ENCODE measurements at regions of chr14 and their contacts with region 1.

Region 1: DNA sequence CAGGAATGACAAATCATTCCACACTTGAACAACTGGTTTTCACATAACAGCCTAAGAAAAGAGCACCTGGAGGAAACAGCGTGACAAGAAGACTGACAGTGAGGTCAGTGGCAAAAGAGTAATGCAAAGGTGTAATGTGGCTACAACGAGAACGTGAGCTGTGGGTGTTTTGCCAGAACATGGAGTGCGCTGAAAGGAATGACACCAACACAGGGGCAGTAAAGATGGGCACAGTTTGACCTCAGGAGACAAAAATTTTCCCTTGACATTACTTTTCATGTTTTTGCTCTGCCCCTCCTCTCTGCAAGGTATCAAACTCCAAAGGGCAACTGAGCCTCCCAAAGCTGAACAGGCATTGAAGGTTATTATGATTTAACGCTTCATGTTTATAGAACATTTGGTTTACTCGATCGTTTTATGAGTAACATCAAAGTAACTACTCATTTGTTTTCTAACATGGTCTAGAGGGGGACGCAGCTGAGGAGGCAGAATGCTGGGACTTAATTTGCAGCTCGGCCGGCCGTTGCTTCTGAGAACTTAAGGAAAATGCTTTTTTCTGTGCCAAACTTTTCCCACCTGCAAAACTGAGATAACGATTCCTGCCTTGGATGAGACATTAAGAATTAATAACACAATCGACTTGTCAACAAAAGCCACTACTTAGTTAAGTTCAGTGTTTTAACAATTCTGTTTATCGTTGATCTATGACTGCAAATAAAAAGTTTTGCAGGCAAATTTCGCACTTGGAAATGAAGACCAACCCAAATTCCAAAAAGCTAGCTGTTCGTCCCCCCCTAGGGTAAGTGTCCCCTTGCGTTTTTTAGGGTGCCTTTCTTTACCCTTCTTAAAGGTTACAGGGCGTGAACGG is 954 bp downstream of the HAUS4 start:
- DNase-seq: no peak
- H3K4me3 Mint-ChIP-seq: peak overlapping the region; percentile 87
- H3K27ac Mint-ChIP-seq: peak overlapping the region; percentile 79
- H3K4me1 Mint-ChIP-seq: peaks cover 16% of the 10 kb centered on the region
- H3K27me3 Mint-ChIP-seq: peaks cover 1% of the 10 kb centered on the region

Region 2: DNA sequence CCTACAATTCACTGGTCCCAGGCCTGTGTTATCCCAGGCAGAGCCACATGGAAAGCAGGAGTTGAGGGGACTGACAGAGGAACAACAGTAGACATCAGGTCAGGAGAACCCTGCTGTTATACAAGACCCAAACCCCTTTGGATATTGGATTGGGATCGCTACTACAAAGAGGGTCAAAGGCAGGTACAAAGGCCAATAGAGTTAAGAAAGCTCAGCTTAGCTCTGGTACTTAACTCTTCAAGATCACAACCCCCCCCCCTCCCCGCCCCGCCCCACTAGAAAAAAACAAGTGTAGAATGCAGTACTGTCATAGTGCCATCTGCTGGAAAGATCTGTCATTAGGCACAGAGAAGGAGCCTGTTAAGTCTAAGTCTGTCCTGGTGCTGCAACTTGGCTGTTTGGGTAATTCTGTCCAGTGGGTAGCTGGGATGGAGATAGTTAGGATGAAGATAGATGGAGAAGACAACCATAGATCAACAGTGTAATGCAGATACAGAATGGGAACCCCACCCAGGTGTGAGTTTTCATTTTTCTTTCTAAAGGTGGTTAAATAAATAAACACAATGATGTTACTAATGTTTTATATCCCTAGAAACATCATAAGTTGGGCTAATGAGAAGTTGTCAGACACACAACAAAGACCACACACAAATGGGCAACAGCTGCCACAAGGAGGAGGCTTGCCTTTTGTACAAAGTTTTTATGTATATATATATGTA is 55.7 kb before region 1 on chr14:
- intact Hi-C with region 1: no loop called
- DNase-seq: peak; percentile 26
- H3K4me3 Mint-ChIP-seq: no peak overlapping the region
- H3K27ac Mint-ChIP-seq: peak overlapping the region; percentile 2
- H3K4me1 Mint-ChIP-seq: peaks cover 19% of the 10 kb centered on the region
- H3K27me3 Mint-ChIP-seq: no peaks in the 10 kb centered on the region

Region 3: GRCh38 chr14:22986508-22987054 is 30.6 kb after region 1 on chr14:
- intact Hi-C with region 1: loop called (anchors 1 kb)
- DNase-seq: peak; percentile 78
- H3K4me3 Mint-ChIP-seq: no peak overlapping the region
- H3K27ac Mint-ChIP-seq: no peak overlapping the region
- H3K4me1 Mint-ChIP-seq: no peaks in the 10 kb centered on the region
- H3K27me3 Mint-ChIP-seq: no peaks in the 10 kb centered on the region

Region 4: DNA sequence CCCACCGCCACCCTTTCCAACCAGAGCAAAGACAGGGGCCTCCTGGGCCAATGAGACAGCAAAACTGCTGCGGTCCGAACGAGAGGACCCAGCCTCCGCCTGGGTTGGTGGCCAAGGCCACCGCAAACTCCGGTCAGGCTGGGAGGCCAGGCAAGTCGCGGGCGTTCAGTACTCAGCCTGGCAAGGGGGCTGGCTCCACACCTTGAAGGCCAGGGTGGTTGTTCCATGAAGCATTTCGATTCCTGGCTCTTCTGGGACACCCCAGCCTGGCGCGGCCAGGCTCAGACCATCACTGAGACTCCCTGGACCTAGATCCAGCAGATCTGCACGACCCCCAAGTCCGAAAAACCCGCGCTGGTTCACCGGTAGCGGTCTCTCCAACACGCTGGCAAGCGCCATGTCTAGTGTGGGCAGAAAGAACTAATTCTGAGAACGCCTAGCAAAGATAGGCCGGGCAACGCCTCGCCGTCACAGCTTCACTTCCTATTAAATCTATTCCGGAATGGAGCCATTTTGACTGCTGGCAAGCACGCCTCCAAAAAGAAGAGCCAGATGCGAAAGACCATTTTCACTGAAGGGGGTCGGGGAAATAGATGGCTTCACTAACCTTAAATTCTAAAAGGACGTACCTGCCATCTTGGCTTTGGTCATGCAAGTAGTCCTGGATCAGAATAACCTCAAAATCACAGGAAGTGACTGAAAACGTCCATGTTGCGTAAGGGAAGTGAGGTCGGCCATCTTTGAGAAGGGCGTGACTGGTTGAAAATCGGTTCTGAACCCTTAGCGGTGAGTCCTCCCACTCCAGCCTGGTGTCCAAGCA is 78.8 kb after region 1 on chr14 and contains the start of gene PSMB5:
- intact Hi-C with region 1: no loop called
- DNase-seq: peak; percentile 86
- H3K4me3 Mint-ChIP-seq: peak within 1 kb of the TSS; percentile 92
- H3K27ac Mint-ChIP-seq: peak within 1 kb of the TSS; percentile 88
- H3K4me1 Mint-ChIP-seq: peaks cover 22% of the 10 kb centered on the region
- H3K27me3 Mint-ChIP-seq: peaks cover 2% of the 10 kb centered on the region
- total RNA-seq, gene PSMB5: 124 and 134 TPM in 2 replicates

Region 5: GRCh38 chr14:23120541-23121251 is 164.8 kb after region 1 on chr14:
- intact Hi-C with region 1: no loop called
- DNase-seq: peak; percentile 73
- H3K4me3 Mint-ChIP-seq: no peak overlapping the region
- H3K27ac Mint-ChIP-seq: peak overlapping the region; percentile 64
- H3K4me1 Mint-ChIP-seq: peaks cover 17% of the 10 kb centered on the region
- H3K27me3 Mint-ChIP-seq: no peaks in the 10 kb centered on the region